Psoas muscle (tissue), 8 donors: ENCODE measurements at regions of chr15 and their contacts with region 1.

Region 1: DNA sequence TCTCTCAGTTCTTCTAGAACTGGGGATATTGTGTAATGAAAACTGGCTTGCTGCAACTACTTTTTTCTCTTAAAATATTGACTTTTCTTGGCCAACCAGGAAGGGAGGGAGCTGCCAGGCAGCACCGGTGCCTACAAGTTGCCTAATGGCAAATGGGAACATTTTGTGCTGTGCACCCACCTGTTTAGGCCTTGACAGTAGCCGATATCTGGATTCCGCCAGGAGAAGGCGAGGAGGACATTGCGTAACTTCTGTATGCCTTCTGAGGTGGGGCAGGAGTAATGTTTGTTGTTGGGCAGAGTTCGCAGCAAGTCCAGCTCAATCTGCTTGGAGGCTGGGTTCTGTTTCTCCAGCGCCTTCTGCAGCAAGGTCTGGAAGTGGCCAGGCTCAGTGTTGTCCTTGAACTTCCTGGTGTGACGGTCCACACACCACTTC is 64.9 kb downstream of the TBC1D2B start:
- DNase-seq: peak in 1 of 2 donors; percentile 78
- ATAC-seq: peak in 2 of 4 donors; percentile 2 to 48
- H3K4me3 ChIP-seq: no peak overlapping the region
- H3K27ac ChIP-seq: no peak overlapping the region
- H3K4me1 ChIP-seq: peaks cover 9% of the 10 kb centered on the region
- H3K27me3 ChIP-seq: no peaks in the 10 kb centered on the region
- CTCF ChIP-seq: no peak

Region 2: DNA sequence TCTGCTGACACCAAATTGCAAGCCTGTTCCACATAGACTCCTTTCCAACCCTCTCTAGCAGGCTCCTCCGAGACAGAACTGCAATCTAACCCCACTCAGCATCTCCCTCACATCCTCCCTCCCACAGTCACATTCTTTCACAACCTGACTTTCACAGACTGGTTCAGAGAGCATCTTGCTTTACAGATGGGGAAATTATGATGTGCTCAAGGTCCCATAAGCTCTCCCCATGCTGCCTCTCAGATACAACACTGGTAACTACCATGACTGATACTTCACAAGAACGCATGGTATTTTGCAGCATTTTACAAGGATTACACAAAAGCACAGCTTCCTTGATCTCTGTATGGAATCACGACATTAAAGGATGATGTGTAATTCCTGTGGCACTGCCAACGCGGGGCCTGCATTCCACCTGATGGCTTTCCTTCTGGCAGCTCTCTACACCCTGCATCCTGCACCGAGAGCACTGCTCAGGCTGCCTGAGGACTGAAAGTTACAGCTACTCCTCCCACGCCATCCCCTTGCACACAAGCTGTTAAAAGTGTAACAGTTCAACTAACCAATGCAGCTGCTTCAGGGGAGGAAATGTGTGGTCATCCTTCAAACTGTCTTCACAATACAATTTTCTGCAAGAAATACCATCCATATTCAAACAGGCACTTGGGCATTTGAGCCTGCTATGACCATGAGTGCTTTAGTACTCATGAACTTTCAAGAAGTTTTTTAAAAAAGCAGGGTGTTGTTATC is 37.2 kb after region 1 on chr15:
- intact Hi-C with region 1: loop called in 1 of 2 experiments (anchors 5 kb)
- DNase-seq: no peak
- ATAC-seq: no peak
- H3K4me3 ChIP-seq: no peak overlapping the region
- H3K27ac ChIP-seq: no peak overlapping the region
- H3K4me1 ChIP-seq: peaks cover 29% of the 10 kb centered on the region
- H3K27me3 ChIP-seq: no peaks in the 10 kb centered on the region
- CTCF ChIP-seq: no peak

Region 3: DNA sequence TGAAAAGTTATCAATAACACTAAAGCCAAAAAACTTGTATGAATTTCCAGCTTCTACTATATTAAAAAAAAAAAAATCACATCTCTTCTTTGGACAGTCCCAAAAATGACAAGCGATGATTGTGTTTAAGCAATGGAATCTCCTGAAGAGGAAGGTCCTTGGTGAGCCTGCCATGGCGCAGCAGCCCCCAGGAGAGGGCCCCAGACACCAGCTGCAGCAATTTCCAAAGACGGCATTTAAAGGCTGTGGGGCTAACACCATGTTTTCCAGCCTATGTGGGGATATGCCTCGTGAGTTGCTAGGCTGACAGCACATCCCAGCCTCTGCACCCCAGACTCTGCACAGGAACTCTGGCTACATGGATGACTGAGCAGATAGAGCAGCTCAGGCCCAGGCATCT is 272.1 kb after region 1 on chr15:
- intact Hi-C with region 1: no loop called
- DNase-seq: no peak
- ATAC-seq: no peak
- H3K4me3 ChIP-seq: no peak overlapping the region
- H3K27ac ChIP-seq: no peak overlapping the region
- H3K4me1 ChIP-seq: no peaks in the 10 kb centered on the region
- H3K27me3 ChIP-seq: no peaks in the 10 kb centered on the region
- CTCF ChIP-seq: no peak